ENCODE measurements at regions of chr1 and their contacts with region 1.

Region 1: DNA sequence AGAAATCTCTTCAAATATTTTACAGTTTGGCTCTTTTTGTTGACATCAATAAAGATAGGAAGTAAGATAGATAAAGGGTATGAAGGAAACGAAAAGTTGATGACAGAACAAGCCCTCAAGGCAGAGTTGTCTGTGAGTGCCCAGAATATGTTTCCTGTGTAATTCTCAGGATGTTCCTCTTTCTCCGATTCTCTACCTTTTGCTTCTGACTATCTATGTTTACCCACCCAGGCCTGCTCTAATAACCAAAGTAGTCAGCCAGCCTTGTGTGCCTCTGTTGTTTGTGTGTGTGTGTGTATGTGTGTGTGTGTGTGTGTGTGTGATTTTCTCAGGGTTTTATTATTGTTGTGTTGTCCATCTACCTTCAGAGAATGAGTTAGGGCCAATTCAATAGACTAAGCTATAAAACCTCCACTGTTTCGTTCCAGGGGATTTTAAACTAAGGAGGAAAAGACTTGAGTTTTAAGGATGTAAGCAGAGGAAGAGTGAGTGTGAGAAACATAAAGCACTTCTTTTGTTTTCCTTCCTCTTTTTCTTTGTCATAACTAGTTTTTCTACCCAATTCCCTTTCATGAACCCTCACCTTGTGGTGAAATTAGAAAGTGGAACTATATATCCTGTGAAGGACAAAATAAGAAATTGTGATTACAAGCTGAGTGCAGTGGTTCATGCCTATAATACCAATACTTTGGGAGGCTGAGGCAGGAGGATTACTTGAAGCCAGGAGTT is 627.4 kb upstream of the NR5A2 start:
- DNase-seq: peak; percentile 56
- ATAC-seq: peak; percentile 88
- H3K4me3 ChIP-seq: no peak overlapping the region
- H3K27ac ChIP-seq: peak overlapping the region; percentile 46
- H3K4me1 ChIP-seq: no peaks in the 10 kb centered on the region; the same call in 1 of the 2 replicates
- H3K27me3 ChIP-seq: no peaks in the 10 kb centered on the region
- CTCF ChIP-seq: no peak
- EP300 ChIP-seq: no peak; a peak in 1 of 4 replicates
- POLR2A ChIP-seq: no peak
- RAD21 ChIP-seq: 0 out of 2 replicates have a peak, but pooled peaks have one; percentile 6

Region 2: DNA sequence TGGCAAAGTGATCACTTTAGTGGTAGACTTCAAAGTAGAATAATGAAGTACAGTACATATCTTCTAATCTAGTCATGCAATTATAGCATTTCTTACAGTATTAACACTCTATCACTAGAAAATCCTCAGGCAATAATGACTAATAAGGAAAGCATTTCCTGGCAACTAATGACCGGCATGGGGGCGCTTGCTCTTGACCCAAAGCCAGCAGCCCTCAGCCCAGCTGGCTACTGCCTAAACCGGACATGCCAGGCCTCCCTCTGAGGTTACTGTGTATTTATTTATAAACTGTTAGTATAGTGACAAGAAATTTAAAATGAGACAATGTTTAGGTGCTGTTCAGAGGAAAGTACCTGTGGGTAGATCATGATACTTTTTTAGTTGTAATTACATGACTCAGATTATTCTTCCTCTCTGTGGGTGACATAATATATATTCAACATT is 127.5 kb before region 1 on chr1:
- CTCF ChIA-PET with region 1: no interaction called
- POLR2A ChIA-PET with region 1: no interaction called
- RAD21 ChIA-PET with region 1: no interaction called
- SMC1A ChIA-PET with region 1: no interaction called
- in situ Hi-C with region 1: no loop called
- intact Hi-C with region 1: loop called (anchors 5 kb)
- DNase-seq: peak; percentile 54
- ATAC-seq: peak; percentile 91
- H3K4me3 ChIP-seq: no peak overlapping the region
- H3K27ac ChIP-seq: no peak overlapping the region
- H3K4me1 ChIP-seq: peaks cover 5% of the 10 kb centered on the region; the same call in 1 of the 2 replicates
- H3K27me3 ChIP-seq: no peaks in the 10 kb centered on the region
- CTCF ChIP-seq: no peak
- EP300 ChIP-seq: peak; percentile 33 to 57; a peak in 2 of 4 replicates
- POLR2A ChIP-seq: no peak
- RAD21 ChIP-seq: no peak

Region 3: GRCh38 chr1:199422198-199422597 is 22.0 kb after region 1 on chr1:
- CTCF ChIA-PET with region 1: interaction called, 3 read pairs
- POLR2A ChIA-PET with region 1: no interaction called
- RAD21 ChIA-PET with region 1: no interaction called
- SMC1A ChIA-PET with region 1: interaction called, 12 read pairs
- in situ Hi-C with region 1: no loop called
- intact Hi-C with region 1: no loop called
- DNase-seq: no peak
- ATAC-seq: peak; percentile 26; the same call in 1 of the 3 replicates
- H3K4me3 ChIP-seq: no peak overlapping the region
- H3K27ac ChIP-seq: no peak overlapping the region
- H3K4me1 ChIP-seq: no peaks in the 10 kb centered on the region
- H3K27me3 ChIP-seq: no peaks in the 10 kb centered on the region
- CTCF ChIP-seq: peak; percentile 15 to 23 (median 19); a peak in 2 of 6 replicates
- EP300 ChIP-seq: no peak
- POLR2A ChIP-seq: no peak
- RAD21 ChIP-seq: peak; percentile 31; the same call in 1 of the 2 replicates

Region 4: DNA sequence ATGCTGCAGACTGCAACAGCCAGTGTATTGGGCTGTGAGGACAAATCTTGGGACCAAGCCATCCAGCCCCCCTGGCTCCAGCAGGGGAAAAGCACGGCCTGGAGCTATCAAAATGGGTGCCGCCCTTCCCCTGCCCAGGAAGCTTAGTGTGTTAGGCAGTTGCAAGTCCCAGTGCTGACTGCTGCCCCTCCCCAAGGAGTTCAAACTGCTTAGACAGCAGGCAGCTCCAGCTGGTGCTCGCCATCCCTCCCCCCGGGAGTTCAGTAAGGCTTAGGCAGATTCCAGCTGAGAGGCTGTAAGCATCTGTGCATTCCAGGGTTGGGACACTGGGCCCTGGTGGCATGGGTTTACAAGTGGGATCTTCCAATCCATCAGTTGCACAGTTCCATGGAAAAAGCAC is 47.7 kb after region 1 on chr1:
- CTCF ChIA-PET with region 1: no interaction called
- POLR2A ChIA-PET with region 1: no interaction called
- RAD21 ChIA-PET with region 1: no interaction called
- SMC1A ChIA-PET with region 1: no interaction called
- in situ Hi-C with region 1: no loop called
- intact Hi-C with region 1: no loop called
- DNase-seq: no peak
- ATAC-seq: no peak
- H3K4me3 ChIP-seq: no peak overlapping the region
- H3K27ac ChIP-seq: no peak overlapping the region
- H3K4me1 ChIP-seq: no peaks in the 10 kb centered on the region
- H3K27me3 ChIP-seq: no peaks in the 10 kb centered on the region; a peak in 2 of 4 replicates
- CTCF ChIP-seq: no peak
- EP300 ChIP-seq: no peak
- POLR2A ChIP-seq: no peak
- RAD21 ChIP-seq: no peak

Region 5: GRCh38 chr1:199646761-199647160 is 246.6 kb after region 1 on chr1:
- CTCF ChIA-PET with region 1: no interaction called
- POLR2A ChIA-PET with region 1: no interaction called
- RAD21 ChIA-PET with region 1: no interaction called
- SMC1A ChIA-PET with region 1: no interaction called
- in situ Hi-C with region 1: no loop called
- intact Hi-C with region 1: no loop called
- DNase-seq: no peak
- ATAC-seq: no peak
- H3K4me3 ChIP-seq: no peak overlapping the region
- H3K27ac ChIP-seq: no peak overlapping the region
- H3K4me1 ChIP-seq: no peaks in the 10 kb centered on the region
- H3K27me3 ChIP-seq: no peaks in the 10 kb centered on the region
- CTCF ChIP-seq: no peak
- EP300 ChIP-seq: no peak
- POLR2A ChIP-seq: no peak
- RAD21 ChIP-seq: no peak

Measured in GM12878 (cell line).